Activated CD8-positive, alpha-beta memory T cell treated with anti-CD3 and anti-CD28 coated beads, Interleukin-2, amount 10 ng/mL, durations not matched to agents 7 days and 5 days (primary cell): ENCODE measurements at regions of chr3 and their contacts with region 1.

Region 1: GRCh38 chr3:49839193-49839809 is 17.1 kb downstream of the TRAIP start:
- DNase-seq: peak; percentile 87
- ATAC-seq: peak; percentile 91
- H3K4me3 Mint-ChIP-seq: no peak overlapping the region
- H3K27ac Mint-ChIP-seq: no peak overlapping the region
- H3K4me1 Mint-ChIP-seq: peaks cover 1% of the 10 kb centered on the region
- H3K27me3 Mint-ChIP-seq: no peaks in the 10 kb centered on the region

Region 2: GRCh38 chr3:49636883-49637609 is 202.3 kb before region 1 on chr3:
- CTCF ChIA-PET with region 1: no interaction called
- DNase-seq: peak; percentile 44
- ATAC-seq: peak; percentile 48
- H3K4me3 Mint-ChIP-seq: no peak overlapping the region
- H3K27ac Mint-ChIP-seq: no peak overlapping the region
- H3K4me1 Mint-ChIP-seq: peaks cover 8% of the 10 kb centered on the region
- H3K27me3 Mint-ChIP-seq: peaks cover 3% of the 10 kb centered on the region

Region 3: DNA sequence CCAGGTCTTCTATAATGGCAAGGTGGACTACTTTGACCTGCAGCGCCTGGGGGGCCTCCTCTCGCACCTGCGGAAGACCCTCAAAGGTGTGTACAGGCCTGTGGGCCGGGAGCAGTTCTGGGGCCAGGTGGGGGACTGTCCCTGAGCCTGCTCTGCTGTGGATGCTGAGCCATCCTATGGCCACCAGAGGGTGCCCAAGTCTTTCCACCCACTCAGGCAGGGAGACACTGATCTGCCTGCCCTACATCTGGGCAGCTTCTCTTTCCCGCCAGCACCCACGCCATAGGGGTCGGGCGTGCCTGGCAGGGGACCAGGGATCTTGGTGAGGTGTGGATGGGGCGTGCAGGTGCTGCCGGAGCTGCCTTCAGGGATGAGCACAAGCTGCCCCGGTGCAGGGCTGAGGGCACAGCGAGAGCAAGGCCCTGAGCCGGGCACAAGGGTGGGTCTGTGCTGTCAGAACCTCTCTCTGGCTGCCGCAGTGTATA is 135.8 kb before region 1 on chr3:
- CTCF ChIA-PET with region 1: interaction called, 22 read pairs
- DNase-seq: peak; percentile 82
- ATAC-seq: peak; percentile 95
- H3K4me3 Mint-ChIP-seq: no peak overlapping the region
- H3K27ac Mint-ChIP-seq: no peak overlapping the region
- H3K4me1 Mint-ChIP-seq: no peaks in the 10 kb centered on the region
- H3K27me3 Mint-ChIP-seq: no peaks in the 10 kb centered on the region

Region 4: DNA sequence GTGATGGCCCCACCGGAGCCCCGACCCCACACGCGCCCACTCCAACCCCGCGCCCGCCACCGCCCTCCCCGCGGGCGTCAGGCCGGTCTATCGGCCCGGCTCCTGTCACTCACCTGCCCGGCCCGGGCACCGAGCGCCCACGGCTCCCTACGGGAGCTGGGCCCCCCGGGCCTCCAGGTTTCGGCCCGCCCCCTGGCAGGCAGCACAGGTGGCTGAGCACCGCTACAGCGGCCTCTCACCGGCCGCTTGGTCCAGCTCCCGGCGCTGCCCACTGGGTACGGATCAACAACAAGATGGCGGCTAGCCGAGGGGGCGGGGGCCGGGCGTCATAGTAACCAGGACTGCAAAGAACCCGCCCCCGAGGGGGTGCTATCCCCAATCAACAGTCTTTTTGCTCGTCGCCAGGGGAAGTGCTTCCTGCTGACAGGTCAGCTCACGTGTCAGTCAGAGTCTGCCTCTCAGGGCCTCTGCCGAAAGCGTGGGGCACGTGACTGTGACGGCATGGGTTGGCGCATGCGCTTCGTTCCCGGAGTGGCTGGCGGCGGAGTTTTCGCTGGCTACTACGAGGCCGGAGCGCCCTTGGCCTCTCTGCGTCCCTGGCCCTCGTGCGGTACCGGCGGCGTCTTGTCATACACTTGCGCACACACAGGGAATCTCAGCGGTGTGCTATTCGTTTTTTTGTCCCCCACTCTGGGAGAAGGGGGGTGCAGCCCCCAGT is 52.9 kb before region 1 on chr3 and contains the start of gene IP6K1:
- CTCF ChIA-PET with region 1: interaction called, 14 read pairs
- DNase-seq: peak; percentile 100
- ATAC-seq: peak; percentile 99
- H3K4me3 Mint-ChIP-seq: peak within 1 kb of the TSS; percentile 77
- H3K27ac Mint-ChIP-seq: peak within 1 kb of the TSS; percentile 92
- H3K4me1 Mint-ChIP-seq: peaks cover 30% of the 10 kb centered on the region
- H3K27me3 Mint-ChIP-seq: no peaks in the 10 kb centered on the region
- total RNA-seq, gene IP6K1: 38.3 to 41.0 TPM

Region 5: DNA sequence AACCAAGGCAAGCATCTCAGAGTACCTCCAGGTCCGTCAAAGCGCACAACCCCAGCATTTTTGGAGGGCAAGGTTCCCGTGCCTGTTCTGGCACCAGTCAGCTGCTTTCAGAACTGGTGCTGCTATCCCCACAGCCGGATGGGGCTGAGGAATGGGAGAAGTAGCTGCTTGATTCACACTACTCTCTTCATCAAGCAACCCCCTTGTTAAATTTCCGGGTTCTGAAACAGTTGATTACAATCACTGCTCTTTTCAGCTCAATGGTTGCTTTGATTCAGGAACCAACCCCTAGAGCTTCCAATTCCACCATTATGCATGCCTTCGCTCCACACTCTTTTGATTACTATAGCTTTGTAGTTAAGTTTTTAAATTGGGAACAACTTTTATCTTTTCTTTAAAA is 13.3 kb before region 1 on chr3:
- CTCF ChIA-PET with region 1: interaction called, 23 read pairs
- DNase-seq: no peak
- ATAC-seq: no peak
- H3K4me3 Mint-ChIP-seq: no peak overlapping the region
- H3K27ac Mint-ChIP-seq: no peak overlapping the region
- H3K4me1 Mint-ChIP-seq: no peaks in the 10 kb centered on the region
- H3K27me3 Mint-ChIP-seq: no peaks in the 10 kb centered on the region

Region 6: DNA sequence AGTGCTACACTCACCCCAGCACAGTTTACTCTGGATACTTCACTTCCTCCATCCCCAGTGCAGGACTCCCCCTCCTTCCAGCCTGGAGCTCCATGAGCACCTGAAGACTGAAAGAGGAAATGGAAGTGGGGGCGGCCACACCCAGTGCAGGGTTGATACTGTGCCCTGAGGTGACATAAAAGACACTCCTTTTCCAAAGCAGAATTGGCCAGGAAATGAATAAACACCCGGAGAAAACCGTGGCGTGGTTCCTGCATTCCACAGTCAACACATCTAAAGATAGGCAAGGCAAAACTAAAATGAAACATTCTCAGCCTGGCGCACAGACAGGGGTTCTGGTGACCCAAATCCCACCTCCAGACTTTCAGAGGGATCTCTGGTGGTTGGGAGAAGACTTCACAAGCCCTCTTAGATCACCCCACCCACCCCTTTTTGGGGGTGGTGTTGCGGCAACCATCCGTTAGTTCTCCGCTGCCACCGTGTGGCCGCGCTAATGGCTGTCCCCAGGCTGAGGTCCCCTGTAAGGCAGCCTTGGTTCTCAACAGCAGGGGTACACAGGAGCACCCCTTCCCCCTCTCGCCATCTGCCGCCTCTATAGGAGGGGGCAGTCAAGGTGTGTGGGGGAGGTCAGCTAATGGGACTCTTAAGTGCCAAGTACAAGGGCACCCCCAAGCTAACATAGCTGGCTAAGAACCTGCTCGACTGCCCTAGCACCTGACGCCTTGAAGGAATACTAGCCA is 66.9 kb after region 1 on chr3:
- CTCF ChIA-PET with region 1: interaction called, 24 read pairs
- DNase-seq: peak; percentile 70
- ATAC-seq: peak; percentile 34
- H3K4me3 Mint-ChIP-seq: peak overlapping the region; percentile 54
- H3K27ac Mint-ChIP-seq: peak overlapping the region; percentile 71
- H3K4me1 Mint-ChIP-seq: peaks cover 35% of the 10 kb centered on the region
- H3K27me3 Mint-ChIP-seq: no peaks in the 10 kb centered on the region

Region 7: DNA sequence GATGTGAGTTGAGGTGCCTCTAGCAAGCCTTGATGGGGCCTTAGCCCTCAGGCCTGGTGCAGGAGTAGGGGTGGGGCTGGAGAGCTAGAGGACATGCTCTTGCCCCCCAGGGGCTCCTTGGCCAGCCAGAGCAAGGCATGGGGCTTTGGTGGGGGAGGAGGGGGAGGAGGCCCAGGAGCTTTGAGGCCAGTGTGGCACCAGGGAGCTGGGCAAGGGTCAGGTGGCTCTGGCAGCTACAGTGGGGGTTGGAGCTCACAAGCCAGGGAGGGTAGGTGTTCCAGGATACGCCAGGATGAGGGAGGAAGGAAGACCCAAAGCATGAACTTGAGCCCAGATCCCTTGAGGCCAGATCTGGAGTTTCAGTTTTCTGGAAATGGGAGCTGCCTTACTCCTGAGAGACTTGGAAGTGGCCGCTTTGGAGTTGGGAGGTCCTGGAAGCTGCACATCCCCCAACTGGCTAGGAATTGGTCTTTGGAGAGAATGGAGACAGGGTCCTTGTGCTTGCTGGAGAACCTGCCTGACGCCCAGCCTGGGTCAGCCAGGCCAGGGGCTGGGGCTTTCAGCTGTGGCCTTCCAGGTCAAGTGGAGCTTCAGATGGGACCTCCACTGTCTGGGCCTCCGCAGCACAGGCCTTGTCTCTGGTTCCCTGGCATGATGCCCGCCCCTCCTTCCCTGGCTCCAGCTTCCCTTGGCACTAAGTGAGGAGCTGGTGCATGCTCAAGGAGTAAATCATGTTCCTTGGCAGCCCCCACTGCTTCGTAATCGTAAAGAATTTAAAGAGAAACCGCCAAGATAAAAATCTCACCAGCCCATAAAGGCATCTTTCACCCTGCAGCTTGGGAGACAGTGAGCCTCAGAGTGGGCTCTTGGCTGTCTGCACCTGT is 324.5 kb after region 1 on chr3:
- CTCF ChIA-PET with region 1: no interaction called
- DNase-seq: no peak
- ATAC-seq: no peak
- H3K4me3 Mint-ChIP-seq: no peak overlapping the region
- H3K27ac Mint-ChIP-seq: no peak overlapping the region
- H3K4me1 Mint-ChIP-seq: no peaks in the 10 kb centered on the region
- H3K27me3 Mint-ChIP-seq: peaks cover 2% of the 10 kb centered on the region